GM10248 (cell line): ENCODE measurements at regions of chr16 and their contacts with region 1.

Region 1: GRCh38 chr16:68528686-68529379 is 10.3 kb upstream of the ZFP90 start:
- DNase-seq: peak; percentile 89
- CTCF ChIP-seq: peak; percentile 99

Region 2: DNA sequence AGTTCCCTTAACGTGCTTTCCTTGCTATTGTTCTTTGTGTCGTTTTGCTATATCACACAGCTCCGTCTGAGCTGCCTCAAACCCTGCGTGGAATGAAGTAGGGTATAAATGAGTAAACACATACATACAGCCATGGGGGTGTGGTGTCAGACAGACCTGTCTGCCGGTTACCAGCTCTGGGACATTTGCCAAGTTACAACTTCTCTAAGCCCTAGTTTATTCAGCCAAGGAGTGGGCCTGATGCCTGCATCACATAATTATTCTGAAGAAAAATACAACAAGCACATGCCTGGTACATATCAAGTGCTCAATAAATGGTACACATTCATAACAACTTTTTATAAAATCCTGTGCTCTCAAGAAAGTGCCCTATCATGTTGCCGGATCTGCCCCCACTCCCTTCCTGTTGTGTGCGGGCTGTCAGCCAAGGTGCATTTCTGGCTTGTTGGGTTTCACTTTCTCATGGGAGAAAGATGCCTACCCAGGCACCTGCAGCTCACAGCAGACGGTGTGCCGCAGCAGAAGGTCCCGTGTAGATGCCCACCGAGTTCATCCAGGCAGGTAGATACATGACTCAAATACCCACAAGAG is 111.0 kb before region 1 on chr16:
- CTCF ChIA-PET with region 1: no interaction called
- POLR2A ChIA-PET with region 1: no interaction called
- DNase-seq: peak; percentile 74
- CTCF ChIP-seq: no peak

Region 3: DNA sequence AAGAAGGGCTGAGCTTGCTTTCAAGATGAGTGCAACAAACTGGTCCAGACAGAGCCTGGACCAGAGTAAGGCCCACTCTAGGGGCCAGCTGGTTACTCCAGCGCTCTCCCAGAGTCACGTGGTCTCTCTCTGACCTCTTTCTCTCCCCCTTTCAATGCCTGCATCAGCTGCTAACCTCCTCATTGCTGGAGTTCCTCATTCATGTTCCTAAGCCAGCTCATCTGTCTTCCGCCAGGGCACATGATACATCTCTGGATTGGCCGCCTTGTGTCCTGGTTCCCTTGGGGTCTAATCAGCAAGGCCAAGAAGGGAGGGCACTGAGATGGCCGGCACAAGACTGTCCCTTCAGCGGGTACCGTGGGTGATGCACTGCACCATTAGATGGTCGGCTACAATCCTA is 16.6 kb before region 1 on chr16:
- CTCF ChIA-PET with region 1: interaction called, 41 read pairs
- POLR2A ChIA-PET with region 1: no interaction called
- DNase-seq: no peak
- CTCF ChIP-seq: no peak

Region 4: DNA sequence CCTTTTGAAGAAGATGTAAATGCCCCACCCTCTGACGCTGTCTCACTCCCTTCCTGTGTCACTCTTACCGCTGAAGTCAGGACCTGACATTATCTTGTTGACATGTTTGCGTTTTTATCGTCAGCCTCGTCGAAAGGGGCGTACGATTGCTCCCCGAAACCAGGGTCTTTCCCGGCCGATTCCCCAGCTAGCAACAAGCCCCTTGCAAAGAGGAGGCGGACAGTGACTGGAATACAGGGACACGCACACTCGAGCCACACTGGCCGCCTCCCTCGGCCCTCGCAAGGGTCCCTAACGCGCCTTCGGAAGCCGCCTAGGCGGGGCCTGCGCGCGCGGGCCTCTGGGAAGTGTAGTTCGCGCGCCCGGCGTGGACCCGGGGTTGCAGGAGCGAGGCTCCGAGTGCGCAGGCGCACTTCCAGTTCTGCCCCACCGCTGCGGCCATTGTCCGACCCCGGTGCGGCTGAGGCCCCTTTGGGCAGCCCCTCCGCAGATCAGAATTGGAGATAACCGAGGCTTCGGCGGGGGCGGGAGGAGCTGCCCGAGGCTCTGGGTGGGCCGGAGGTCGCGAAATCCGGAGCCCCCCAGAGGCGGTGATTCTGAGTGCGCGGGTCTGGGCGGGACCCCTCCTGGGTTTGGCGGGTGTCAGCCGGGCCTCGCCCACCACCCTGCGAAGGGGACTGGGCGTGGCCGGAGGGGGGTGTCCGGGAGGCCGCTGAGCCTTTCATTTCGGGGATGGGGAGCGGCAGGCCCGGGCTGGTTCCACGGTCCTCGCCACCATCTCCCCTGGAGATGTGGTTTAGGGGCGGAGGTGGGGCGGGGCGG is 10.3 kb after region 1 on chr16 and contains the start of gene ZFP90:
- CTCF ChIA-PET with region 1: interaction called, 27 read pairs
- POLR2A ChIA-PET with region 1: no interaction called
- DNase-seq: peak; percentile 98
- CTCF ChIP-seq: no peak

Region 5: GRCh38 chr16:68590201-68590994 is 61.6 kb after region 1 on chr16:
- CTCF ChIA-PET with region 1: interaction called, 16 read pairs
- POLR2A ChIA-PET with region 1: no interaction called
- DNase-seq: peak; percentile 67
- CTCF ChIP-seq: peak; percentile 74

Region 6: GRCh38 chr16:68800257-68800875 is 271.5 kb after region 1 on chr16:
- CTCF ChIA-PET with region 1: interaction called, 22 read pairs
- POLR2A ChIA-PET with region 1: no interaction called
- DNase-seq: peak; percentile 75
- CTCF ChIP-seq: peak; percentile 72

Region 7: DNA sequence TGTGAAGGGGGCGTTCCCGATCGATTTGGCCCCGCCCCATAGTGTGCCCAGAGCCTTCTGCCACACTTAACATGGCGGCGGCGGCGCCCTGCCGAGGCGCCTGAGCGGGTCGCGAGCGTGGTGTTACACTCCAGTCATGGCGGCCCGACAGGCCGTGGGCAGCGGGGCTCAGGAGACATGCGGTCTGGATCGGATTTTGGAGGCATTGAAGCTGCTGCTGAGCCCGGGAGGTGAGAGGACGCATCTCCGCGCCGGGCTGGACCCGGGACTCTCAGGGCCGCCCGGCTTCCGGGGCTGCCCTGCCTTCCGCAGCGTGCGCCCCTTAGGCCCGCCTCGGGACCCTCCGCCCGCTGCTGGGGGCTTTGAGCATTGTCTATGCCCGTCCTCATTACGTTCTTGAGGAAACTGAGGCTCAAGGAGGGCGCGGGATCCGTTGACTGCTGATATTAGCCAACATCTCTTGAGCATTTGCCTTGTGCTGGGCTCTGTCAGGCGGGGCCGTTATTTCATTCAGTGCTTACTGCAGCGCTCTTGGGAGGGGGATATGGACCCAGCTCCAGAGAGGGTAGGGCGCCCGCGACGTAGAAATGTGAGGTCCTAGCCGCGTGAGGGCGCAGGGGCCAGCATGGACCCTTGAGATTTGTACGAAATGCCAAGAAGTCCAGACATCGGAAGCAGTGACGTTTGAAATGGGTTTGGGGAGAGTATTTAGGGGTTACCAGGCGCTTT is 314.8 kb after region 1 on chr16 and contains the start of gene TANGO6:
- CTCF ChIA-PET with region 1: interaction called, 13 read pairs
- POLR2A ChIA-PET with region 1: no interaction called
- DNase-seq: peak; percentile 91
- CTCF ChIP-seq: peak; percentile 38

Region 8: GRCh38 chr16:69123910-69124309 is 595.1 kb after region 1 on chr16:
- CTCF ChIA-PET with region 1: interaction called, 50 read pairs
- POLR2A ChIA-PET with region 1: no interaction called
- DNase-seq: peak; percentile 68
- CTCF ChIP-seq: peak; percentile 67